ENCODE measurements at regions of chr15 and their contacts with region 1.

Region 1: GRCh38 chr15:98658831-98659699 is 10.7 kb downstream of the IGF1R start:
- DNase-seq: peak in 1 of 5 donors; percentile 40
- ATAC-seq: peak; percentile 43 to 80 (median 72)
- H3K4me3 ChIP-seq: no peak overlapping the region
- H3K27ac ChIP-seq: peak overlapping the region in 1 of 12 donors; percentile 23
- H3K4me1 ChIP-seq: peaks cover 0 to 84% (median 46%) of the 10 kb centered on the region in 12 donors
- H3K27me3 ChIP-seq: no peaks in the 10 kb centered on the region
- CTCF ChIP-seq: peak; percentile 75 to 90 (median 82)
- POLR2A ChIP-seq: no peak

Region 2: DNA sequence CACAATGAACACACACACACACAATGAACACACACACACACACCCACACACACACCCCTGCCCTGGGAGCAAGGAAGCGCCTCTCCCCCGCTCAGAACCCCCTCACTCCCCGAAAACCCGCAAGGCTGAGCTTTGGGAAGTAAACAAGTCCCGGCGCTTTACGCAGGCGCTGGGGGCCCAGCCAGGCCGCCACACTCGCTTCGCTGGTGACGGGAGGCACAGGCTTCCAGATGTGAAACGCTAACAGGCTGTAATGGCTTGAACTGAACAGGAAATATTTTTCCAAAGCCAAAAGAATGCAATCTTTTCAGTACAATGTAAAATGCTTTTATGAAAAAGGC is 133.4 kb before region 1 on chr15:
- intact Hi-C with region 1: loop called in 1 of 10 experiments (anchors 5 kb)
- DNase-seq: no peak
- ATAC-seq: peak in 1 of 4 donors; percentile 32
- H3K4me3 ChIP-seq: peak overlapping the region in 1 of 12 donors; percentile 19
- H3K27ac ChIP-seq: no peak overlapping the region
- H3K4me1 ChIP-seq: no peaks in the 10 kb centered on the region
- H3K27me3 ChIP-seq: peaks cover 0 to 10% (median 0%) of the 10 kb centered on the region in 9 donors
- CTCF ChIP-seq: no peak
- POLR2A ChIP-seq: no peak

Region 3: DNA sequence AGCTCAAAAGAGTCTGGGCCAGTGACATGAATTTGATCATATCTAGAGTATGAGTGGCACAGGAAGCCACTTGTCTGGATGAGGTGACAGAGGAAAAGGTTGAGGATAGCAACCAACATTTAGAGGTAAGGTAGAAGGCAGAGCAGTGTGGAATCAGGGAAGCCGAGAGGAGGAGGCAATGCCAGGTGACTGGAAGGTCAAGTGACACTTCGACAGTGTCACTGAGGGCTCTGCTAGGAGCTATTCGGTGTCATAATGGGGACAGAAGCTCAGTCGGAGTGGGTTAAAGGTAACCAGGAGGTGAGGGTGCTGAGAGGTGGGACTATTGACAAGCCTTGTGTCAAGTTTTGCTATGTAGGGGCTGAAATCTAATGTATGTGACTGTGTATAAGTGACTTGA is 46.0 kb after region 1 on chr15:
- intact Hi-C with region 1: loop called in 1 of 10 experiments (anchors 5 kb)
- DNase-seq: no peak
- ATAC-seq: peak in 2 of 4 donors; percentile 12 to 19
- H3K4me3 ChIP-seq: no peak overlapping the region
- H3K27ac ChIP-seq: peak overlapping the region in 5 of 12 donors; percentile 30 to 56 (median 43)
- H3K4me1 ChIP-seq: peaks cover 0 to 81% (median 59%) of the 10 kb centered on the region in 12 donors
- H3K27me3 ChIP-seq: no peaks in the 10 kb centered on the region
- CTCF ChIP-seq: no peak
- POLR2A ChIP-seq: no peak

Region 4: GRCh38 chr15:98734466-98735199 is 75.6 kb after region 1 on chr15:
- intact Hi-C with region 1: loop called in 4 of 10 experiments (anchors 5 to 10 kb)
- DNase-seq: no peak
- ATAC-seq: peak in 1 of 4 donors; percentile 12
- H3K4me3 ChIP-seq: no peak overlapping the region
- H3K27ac ChIP-seq: peak overlapping the region in 9 of 12 donors; percentile 6 to 73 (median 38)
- H3K4me1 ChIP-seq: peaks cover 0 to 93% (median 54%) of the 10 kb centered on the region in 12 donors
- H3K27me3 ChIP-seq: no peaks in the 10 kb centered on the region
- CTCF ChIP-seq: no peak
- POLR2A ChIP-seq: no peak

Region 5: DNA sequence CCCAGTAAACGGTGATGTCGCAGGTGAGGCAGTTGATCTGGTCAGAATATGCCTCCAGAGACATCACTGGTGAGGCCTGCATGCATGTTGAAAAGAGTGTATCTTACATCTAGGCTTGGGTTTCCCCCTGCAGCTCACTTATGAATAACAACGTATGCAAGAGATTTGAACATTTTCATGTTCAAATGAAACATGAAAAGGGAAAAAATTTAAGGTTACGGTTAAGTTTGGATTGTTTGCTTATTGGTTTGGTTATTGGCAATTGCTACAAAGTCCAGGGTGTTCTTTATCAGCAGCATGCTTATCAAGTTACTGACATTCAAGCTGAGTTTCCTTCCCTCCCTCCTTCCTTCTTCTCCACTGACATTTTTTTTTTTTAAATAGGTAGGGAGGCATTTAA is 112.5 kb after region 1 on chr15:
- intact Hi-C with region 1: loop called in 9 of 10 experiments (anchors 5 kb)
- DNase-seq: no peak
- ATAC-seq: no peak
- H3K4me3 ChIP-seq: no peak overlapping the region
- H3K27ac ChIP-seq: peak overlapping the region in 1 of 12 donors; percentile 25
- H3K4me1 ChIP-seq: peaks cover 0 to 76% (median 33%) of the 10 kb centered on the region in 12 donors
- H3K27me3 ChIP-seq: no peaks in the 10 kb centered on the region
- CTCF ChIP-seq: peak in 1 of 12 donors; percentile 17
- POLR2A ChIP-seq: no peak

Measured in heart left ventricle (tissue), 16 donors.